ENCODE measurements at regions of chr1 and their contacts with region 1.

Region 1: GRCh38 chr1:12078938-12079861 is 16.1 kb downstream of the TNFRSF8 start:
- DNase-seq: peak; percentile 59 to 66 (median 62)
- H3K4me3 ChIP-seq: no peak overlapping the region
- H3K27ac ChIP-seq: no peak overlapping the region
- H3K4me1 ChIP-seq: peaks cover 2% of the 10 kb centered on the region
- H3K27me3 ChIP-seq: no peaks in the 10 kb centered on the region
- CTCF ChIP-seq: peak; percentile 23 to 52 (median 28)
- EP300 ChIP-seq: no peak
- POLR2A ChIP-seq: no peak

Region 2: DNA sequence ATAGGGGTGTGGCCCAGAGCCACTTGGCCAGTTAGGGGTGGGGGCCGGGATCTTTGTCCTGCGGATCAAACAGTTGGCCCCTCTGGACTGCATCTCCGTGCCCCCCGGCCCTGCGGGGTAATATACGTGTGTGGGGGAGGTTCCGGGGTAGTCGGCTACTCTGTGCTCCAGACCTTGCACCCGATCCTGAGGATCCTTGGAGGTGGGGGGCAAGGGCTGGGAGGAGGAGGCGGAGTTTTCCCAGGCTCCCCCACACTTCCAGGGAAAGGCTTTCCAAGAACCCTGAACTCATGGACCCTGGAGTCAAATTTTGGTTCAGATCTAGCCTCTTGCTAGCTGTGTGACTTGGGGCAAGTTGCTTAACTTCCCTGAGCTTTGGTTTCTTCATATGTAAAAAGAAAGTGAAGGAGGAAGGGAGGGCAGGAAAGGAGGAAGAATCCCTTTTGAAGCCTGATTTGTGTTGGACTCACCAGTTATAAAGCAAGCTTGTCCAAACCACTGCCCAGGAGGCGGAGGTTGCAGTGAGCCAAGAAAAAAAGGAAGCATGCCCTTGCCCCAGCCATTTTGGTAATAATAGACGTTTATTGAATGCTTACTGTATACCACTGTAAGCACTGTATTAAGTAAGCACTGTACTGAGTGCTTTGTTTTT is 59.2 kb before region 1 on chr1:
- intact Hi-C with region 1: loop called in 1 of 4 experiments (anchors 10 kb)
- DNase-seq: peak in 2 of 5 donors; percentile 44 to 51
- H3K4me3 ChIP-seq: peak overlapping the region; percentile 92
- H3K27ac ChIP-seq: peak overlapping the region; percentile 55 to 81
- H3K4me1 ChIP-seq: peaks cover 12% of the 10 kb centered on the region
- H3K27me3 ChIP-seq: no peaks in the 10 kb centered on the region
- CTCF ChIP-seq: no peak
- EP300 ChIP-seq: no peak
- POLR2A ChIP-seq: no peak

Region 3: GRCh38 chr1:12032161-12032621 is 47.0 kb before region 1 on chr1:
- intact Hi-C with region 1: loop called in 1 of 4 experiments (anchors 1 kb)
- DNase-seq: peak in 4 of 5 donors; percentile 37 to 65 (median 56)
- H3K4me3 ChIP-seq: no peak overlapping the region
- H3K27ac ChIP-seq: peak overlapping the region; percentile 0 to 53
- H3K4me1 ChIP-seq: peaks cover 17% of the 10 kb centered on the region
- H3K27me3 ChIP-seq: no peaks in the 10 kb centered on the region
- CTCF ChIP-seq: no peak
- EP300 ChIP-seq: no peak
- POLR2A ChIP-seq: no peak